ENCODE measurements at regions of chr10 and their contacts with region 1.

Region 1: DNA sequence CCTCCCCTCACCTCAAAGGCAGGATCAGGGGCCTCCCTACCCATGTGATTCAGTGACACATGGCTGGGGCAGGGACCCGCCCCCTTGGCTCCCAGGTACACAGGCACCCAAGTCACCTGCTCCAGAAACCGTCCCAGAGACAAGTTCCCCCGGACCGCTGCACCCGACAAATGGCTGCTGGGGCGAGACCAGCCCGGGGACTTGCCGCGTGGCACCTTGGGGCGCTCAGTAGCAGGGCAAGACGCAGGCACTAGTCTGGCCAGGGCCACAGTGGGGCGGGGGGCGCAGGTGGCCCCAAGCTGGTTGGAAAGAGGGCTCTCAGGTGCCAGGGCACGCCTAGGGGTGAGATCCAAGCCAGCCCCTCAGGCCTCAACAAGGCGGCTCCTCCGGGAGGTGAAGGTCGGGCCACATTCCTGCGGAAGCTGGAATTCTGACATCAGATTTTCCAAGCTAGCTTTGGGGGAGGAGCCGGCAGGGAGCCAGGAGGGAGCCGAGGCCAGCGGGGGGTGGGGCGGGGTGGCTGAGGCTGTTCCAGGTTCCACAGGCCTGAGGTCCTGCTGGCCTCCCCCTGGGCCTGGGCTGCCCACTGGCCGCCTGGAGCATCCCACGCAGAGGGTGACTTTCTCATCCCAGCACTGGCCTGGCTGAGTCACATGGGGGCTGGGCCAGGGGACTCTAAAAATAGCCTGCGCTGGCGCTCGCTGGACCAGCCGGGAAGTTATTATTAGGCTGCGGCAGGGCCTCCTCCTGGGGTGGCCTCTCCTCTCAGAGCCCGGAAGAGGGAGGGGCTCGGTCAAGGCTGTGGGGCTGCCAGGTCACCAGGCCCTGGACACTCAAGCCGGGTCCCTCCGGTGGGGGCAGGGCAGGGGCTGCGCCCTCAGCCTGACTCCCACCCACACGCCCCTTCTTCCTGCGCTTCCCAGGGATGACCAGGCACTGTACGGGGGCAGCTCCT is 20.5 kb upstream of the INPP5A start:
- DNase-seq: peak; percentile 93
- ATAC-seq: peak; percentile 91

Region 2: GRCh38 chr10:132347211-132347930 is 169.7 kb before region 1 on chr10:
- intact Hi-C with region 1: no loop called
- DNase-seq: no peak
- ATAC-seq: no peak

Region 3: GRCh38 chr10:132588301-132589013 is 71.4 kb after region 1 on chr10:
- intact Hi-C with region 1: loop called (anchors 2 kb)
- DNase-seq: peak; percentile 84
- ATAC-seq: peak; percentile 49

Region 4: GRCh38 chr10:132627666-132628531 is 110.9 kb after region 1 on chr10:
- intact Hi-C with region 1: loop called (anchors 1 kb)
- DNase-seq: no peak
- ATAC-seq: peak; percentile 1